Mammary epithelial cell (primary cell): ENCODE measurements at regions of chr6 and their contacts with region 1.

Region 1: DNA sequence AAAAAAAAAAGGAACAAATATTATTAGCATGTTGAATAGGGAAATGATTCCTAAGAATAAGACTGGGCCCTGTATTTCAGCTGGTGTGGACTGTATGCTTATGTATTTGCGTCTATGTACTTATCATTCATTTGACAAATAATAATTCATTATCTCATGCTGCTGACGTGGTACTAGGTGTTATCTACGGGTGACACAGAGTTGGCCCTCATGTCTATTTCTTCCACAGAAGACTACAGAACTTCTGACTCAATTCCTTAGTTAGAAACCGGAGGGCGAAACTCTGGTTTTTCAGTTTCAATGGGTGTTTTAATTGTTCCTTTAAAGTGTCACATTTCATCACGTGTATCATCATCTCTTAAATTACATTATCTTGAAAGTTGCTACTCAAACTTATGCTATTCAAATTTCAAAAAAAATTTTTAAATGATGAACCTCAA is 305.9 kb downstream of the CLIC5 start:
- DNase-seq: no peak
- H3K4me3 ChIP-seq: no peak overlapping the region
- H3K27ac ChIP-seq: no peak overlapping the region
- H3K4me1 ChIP-seq: no peaks in the 10 kb centered on the region
- H3K27me3 ChIP-seq: no peaks in the 10 kb centered on the region
- CTCF ChIP-seq: no peak

Region 2: DNA sequence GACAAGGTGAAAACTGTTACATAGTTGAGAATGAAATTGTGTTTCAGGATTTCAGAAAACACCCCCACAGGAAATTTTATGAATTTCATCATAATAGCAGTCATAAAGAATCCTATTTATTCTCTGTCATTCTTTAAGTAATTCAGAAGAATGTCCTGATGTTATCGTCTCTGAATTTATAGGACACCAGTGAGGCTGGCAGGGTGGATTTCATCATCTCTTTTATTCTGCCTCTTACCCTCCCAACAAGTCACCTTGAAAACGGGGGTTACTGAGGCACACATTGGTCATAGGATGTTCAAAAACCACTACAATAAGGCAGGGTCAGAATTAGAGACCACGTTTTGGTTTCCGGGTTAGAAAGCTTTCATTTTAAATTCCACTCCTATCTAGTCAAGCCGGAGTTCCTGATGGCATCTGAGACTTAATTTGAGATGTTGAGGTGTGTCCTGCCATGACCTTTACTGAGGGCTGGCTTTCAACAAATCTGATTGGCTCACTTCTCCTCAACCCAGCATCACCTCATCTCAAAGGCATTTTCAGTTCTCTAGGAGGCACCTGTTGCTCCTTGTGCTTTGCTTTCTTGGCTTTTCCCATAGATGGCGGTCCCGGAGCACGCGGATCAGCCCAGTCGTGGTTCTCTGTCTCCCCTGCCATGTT is 101.4 kb before region 1 on chr6:
- CTCF ChIA-PET with region 1: interaction called, 3 read pairs
- dilution Hi-C with region 1: loop called (anchors 10 kb)
- in situ Hi-C with region 1: no loop called
- intact Hi-C with region 1: no loop called
- DNase-seq: peak; percentile 69
- H3K4me3 ChIP-seq: no peak overlapping the region
- H3K27ac ChIP-seq: peak overlapping the region; percentile 70
- H3K4me1 ChIP-seq: peaks cover 30% of the 10 kb centered on the region
- H3K27me3 ChIP-seq: no peaks in the 10 kb centered on the region
- CTCF ChIP-seq: no peak

Region 3: DNA sequence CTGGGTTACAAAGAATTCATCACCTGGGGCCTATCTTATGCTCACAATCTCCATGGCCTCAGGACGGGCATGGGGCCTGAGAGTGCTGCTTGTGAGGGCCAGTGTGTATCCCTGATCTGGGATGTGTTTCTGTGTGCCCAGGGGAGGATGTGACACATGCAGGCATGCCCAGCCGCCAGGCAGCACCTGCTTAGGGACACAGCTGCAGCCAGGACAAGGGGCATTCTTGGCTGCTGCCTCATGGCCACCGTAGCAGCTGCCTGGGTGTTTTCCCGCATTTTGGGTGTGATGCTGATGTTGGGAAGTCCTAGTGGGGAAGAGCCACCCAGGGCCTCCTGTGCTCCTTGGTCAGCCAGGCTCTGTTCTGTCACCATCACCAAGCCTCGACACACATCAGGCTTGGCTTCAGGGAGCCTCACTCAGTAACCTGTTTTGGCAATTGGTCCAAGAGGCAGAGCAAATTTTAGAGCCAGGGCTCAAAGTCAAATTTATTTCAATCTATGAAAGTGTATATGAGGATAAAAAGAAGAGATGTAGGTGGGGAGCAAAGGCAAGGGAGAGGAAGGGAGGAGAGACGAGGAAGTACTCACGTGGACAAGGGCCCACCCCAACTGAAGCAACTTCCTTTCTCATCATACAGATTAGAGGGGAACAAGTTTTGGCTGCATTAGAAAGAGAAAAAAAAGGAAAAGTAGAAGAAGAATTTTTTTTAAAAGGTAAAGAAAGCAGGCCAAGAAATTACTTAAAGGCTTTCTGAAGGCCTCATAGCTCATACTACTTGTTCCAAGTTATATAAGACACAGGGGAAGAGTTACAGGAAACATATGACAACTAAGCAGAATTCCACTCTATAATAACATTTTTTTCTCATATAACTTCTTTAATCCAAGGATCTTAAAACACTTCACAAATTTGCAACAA is 62.2 kb before region 1 on chr6:
- CTCF ChIA-PET with region 1: no interaction called
- dilution Hi-C with region 1: loop called (anchors 10 kb)
- in situ Hi-C with region 1: no loop called
- intact Hi-C with region 1: no loop called
- DNase-seq: peak; percentile 40
- H3K4me3 ChIP-seq: no peak overlapping the region
- H3K27ac ChIP-seq: no peak overlapping the region
- H3K4me1 ChIP-seq: peaks cover 35% of the 10 kb centered on the region
- H3K27me3 ChIP-seq: no peaks in the 10 kb centered on the region
- CTCF ChIP-seq: no peak